ENCODE measurements at regions of chr3 and their contacts with region 1.

Region 1: GRCh38 chr3:45656575-45657363 is 32.4 kb upstream of the SACM1L start:
- DNase-seq: peak; percentile 84 to 91
- H3K4me3 ChIP-seq: no peak overlapping the region
- H3K4me1 ChIP-seq: peaks cover 4% of the 10 kb centered on the region
- H3K27me3 ChIP-seq: no peaks in the 10 kb centered on the region

Region 2: DNA sequence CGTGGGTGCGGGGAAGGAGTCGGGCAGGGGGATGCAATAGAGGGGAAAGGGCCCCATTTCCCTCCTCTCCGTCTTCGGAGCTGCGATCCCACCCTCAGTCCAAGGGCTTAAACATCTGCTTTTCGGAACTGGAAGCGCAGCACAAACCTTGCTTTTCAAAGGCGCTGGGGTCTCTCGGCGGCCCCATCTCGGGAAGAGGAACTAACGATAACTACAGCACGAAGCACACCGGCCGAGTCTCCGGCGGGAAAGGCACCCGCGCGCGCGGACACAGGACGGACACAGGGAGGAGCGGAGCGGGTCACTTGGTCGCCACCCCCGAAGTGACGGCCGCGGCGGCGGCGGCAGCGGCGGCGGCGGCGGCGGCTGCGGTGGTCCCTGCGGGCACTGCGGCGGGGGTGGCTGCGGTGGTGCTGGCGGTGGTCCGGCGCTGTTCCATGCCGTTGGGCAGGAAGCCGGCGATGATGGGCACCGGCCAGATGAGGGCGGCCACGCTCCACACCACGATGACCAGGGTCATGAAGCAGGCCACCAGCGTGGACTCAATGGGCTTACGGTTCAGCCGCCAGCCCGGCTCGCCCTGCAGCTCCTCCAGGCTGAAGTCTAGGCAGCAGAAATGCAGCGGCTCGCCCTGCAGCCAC is 431.8 kb before region 1 on chr3:
- in situ Hi-C with region 1: loop called (anchors 25 kb)
- DNase-seq: peak; percentile 50 to 83
- H3K4me3 ChIP-seq: peak overlapping the region; percentile 45
- H3K4me1 ChIP-seq: peaks cover 15% of the 10 kb centered on the region
- H3K27me3 ChIP-seq: no peaks in the 10 kb centered on the region

Region 3: GRCh38 chr3:45311953-45312801 is 344.6 kb before region 1 on chr3:
- in situ Hi-C with region 1: no loop called
- DNase-seq: peak in 1 of 2 experiments; percentile 26
- H3K4me3 ChIP-seq: no peak overlapping the region
- H3K4me1 ChIP-seq: peaks cover 11% of the 10 kb centered on the region
- H3K27me3 ChIP-seq: no peaks in the 10 kb centered on the region

Region 4: DNA sequence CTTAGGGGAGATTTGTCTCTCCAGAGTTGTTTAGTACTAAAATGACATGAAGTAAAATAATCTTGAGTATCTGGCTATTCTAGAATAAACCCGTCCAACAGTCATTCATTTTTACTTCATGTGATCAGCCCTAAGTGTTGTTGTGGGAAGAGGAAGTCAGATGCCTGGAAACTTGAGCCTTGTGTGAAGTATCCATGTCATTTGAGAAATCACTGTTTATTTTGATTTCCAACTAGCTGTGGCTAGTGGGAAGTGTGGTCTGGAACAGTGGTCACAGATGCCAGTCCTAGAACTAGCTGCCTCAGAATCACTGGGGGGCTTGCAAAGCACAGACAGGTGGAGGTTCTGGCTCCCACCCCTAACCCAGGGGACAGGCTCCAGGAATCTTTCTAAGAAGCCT is 139.9 kb before region 1 on chr3:
- in situ Hi-C with region 1: loop called (anchors 10 kb)
- DNase-seq: no peak
- H3K4me3 ChIP-seq: no peak overlapping the region
- H3K4me1 ChIP-seq: no peaks in the 10 kb centered on the region
- H3K27me3 ChIP-seq: no peaks in the 10 kb centered on the region

Region 5: DNA sequence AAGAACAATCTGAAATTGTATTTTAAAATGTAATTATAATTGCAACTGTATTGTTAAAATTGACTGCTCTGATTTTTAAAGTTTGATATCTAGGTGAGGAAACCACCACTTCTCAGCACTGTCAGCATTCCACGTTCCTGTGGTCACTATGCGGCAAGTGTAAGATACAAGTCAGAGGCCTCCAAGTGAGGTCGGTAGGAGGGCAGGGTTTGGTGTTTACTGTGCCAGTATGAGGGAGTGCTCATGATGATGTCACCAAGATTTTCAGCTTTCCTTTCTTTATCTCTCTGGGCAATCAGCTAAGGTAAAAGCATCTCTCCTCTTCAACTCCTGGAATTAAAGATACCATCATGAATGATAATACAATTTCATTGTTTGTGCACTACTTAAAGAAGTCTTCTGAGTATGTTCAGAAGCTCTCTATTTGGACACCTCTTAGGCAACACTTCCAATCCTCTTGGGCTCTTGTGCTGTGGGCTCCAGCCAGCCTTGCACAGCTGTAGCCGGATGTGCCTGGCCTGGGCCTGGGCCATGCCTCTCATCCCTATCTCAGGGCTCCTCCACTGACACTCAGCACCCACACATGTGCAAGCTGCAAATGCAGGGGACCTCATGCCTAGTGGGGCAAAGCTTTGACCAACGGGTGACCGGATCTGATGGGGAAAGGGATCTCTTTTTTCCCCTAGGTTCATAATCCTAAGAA is 628.4 kb after region 1 on chr3:
- in situ Hi-C with region 1: no loop called
- DNase-seq: no peak
- H3K4me3 ChIP-seq: no peak overlapping the region
- H3K4me1 ChIP-seq: no peaks in the 10 kb centered on the region
- H3K27me3 ChIP-seq: no peaks in the 10 kb centered on the region